ENCODE measurements at regions of chr1 and their contacts with region 1.

Region 1: GRCh38 chr1:109790735-109791494 is 27.2 kb upstream of the EPS8L3 start:
- DNase-seq: peak; percentile 94
- H3K4me3 Mint-ChIP-seq: peak overlapping the region; percentile 53
- H3K27ac Mint-ChIP-seq: peak overlapping the region; percentile 95
- H3K4me1 Mint-ChIP-seq: peaks cover 66% of the 10 kb centered on the region
- H3K27me3 Mint-ChIP-seq: no peaks in the 10 kb centered on the region

Region 2: GRCh38 chr1:109248797-109249642 is 541.9 kb before region 1 on chr1 and contains the start of gene CELSR2:
- intact Hi-C with region 1: no loop called
- DNase-seq: peak; percentile 92
- H3K4me3 Mint-ChIP-seq: peak within 1 kb of the TSS; percentile 71
- H3K27ac Mint-ChIP-seq: no peak within 1 kb of the TSS
- H3K4me1 Mint-ChIP-seq: peaks cover 4% of the 10 kb centered on the region
- H3K27me3 Mint-ChIP-seq: peaks cover 20% of the 10 kb centered on the region
- total RNA-seq, gene CELSR2: 3.8 and 4.1 TPM in 2 replicates

Region 3: GRCh38 chr1:109802901-109803561 is 12.1 kb after region 1 on chr1:
- intact Hi-C with region 1: loop called (anchors 1 kb)
- DNase-seq: no peak
- H3K4me3 Mint-ChIP-seq: peak overlapping the region; percentile 75
- H3K27ac Mint-ChIP-seq: peak overlapping the region; percentile 98
- H3K4me1 Mint-ChIP-seq: peaks cover 76% of the 10 kb centered on the region
- H3K27me3 Mint-ChIP-seq: no peaks in the 10 kb centered on the region

Region 4: GRCh38 chr1:109816175-109816811 is 25.4 kb after region 1 on chr1:
- intact Hi-C with region 1: no loop called
- DNase-seq: no peak
- H3K4me3 Mint-ChIP-seq: no peak overlapping the region
- H3K27ac Mint-ChIP-seq: no peak overlapping the region
- H3K4me1 Mint-ChIP-seq: peaks cover 13% of the 10 kb centered on the region
- H3K27me3 Mint-ChIP-seq: peaks cover 2% of the 10 kb centered on the region

Region 5: GRCh38 chr1:109850194-109850593 is 59.3 kb after region 1 on chr1:
- intact Hi-C with region 1: no loop called
- DNase-seq: no peak
- H3K4me3 Mint-ChIP-seq: no peak overlapping the region
- H3K27ac Mint-ChIP-seq: no peak overlapping the region
- H3K4me1 Mint-ChIP-seq: peaks cover 2% of the 10 kb centered on the region
- H3K27me3 Mint-ChIP-seq: no peaks in the 10 kb centered on the region

Region 6: GRCh38 chr1:109890115-109890953 is 99.4 kb after region 1 on chr1:
- intact Hi-C with region 1: loop called (anchors 1 kb)
- DNase-seq: no peak
- H3K4me3 Mint-ChIP-seq: peak overlapping the region; percentile 18
- H3K27ac Mint-ChIP-seq: peak overlapping the region; percentile 90
- H3K4me1 Mint-ChIP-seq: peaks cover 36% of the 10 kb centered on the region
- H3K27me3 Mint-ChIP-seq: no peaks in the 10 kb centered on the region

Measured in activated CD4-positive, alpha-beta T cell treated with anti-CD3 and anti-CD28 coated beads, Interleukin-2, amount 10 ng/mL, durations not matched to agents 24 days and 14 days (primary cell).